A549 (cell line): ENCODE measurements at regions of chr17 and their contacts with region 1.

Region 1: DNA sequence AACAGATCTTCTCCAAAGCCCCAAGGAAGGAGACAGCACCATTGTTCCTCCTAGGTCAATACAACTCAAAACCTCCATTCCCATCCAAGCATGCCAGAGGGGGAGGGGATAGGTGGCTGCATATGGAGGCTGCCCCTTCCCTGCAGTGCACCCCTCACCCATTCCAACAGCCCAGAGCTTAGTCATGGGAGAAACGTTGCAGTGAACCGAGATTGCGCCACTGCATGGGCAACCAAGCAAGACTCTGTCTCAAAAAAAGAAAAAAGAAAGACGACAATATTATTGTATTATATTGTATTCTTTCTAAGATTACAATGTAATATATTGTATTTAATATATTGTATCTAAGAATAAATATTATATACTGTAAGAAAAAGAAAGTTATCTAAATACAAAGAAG is 36.4 kb upstream of the CD300E start:
- DNase-seq: no peak
- ATAC-seq: no peak
- H3K4me3 ChIP-seq: no peak overlapping the region
- H3K27ac ChIP-seq: no peak overlapping the region
- H3K4me1 ChIP-seq: 0 out of 3 replicates have a peak, but pooled peaks cover 3% of the 10 kb centered on the region
- CTCF ChIP-seq: no peak
- EP300 ChIP-seq: no peak
- POLR2A ChIP-seq: no peak
- RAD21 ChIP-seq: no peak

Region 2: DNA sequence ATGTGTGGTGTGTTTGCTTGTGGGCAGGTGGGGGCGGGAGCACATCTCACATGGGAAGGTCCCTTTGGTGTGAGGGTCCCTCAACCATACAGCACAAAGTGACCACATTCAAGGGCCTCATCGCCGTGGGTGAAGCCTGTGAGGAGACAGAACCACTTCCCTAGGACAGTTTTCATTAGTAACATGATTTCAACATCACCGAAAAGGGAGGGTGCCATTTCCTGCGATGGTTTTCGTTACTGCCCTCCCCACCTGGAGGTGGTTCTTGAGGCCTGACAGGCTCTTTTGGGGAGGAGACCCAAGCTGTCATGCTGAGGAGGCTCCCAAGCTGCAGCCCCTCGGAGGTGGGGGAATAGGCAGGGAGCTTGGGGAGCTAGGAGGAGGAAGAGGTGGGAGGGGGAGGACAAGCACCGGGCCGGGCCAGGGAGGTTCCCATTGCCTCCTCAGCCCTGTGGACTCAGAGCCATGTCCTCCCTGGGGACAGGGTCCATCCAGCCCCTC is 138.1 kb before region 1 on chr17:
- CTCF ChIA-PET with region 1: no interaction called
- POLR2A ChIA-PET with region 1: no interaction called
- DNase-seq: no peak
- ATAC-seq: no peak
- H3K4me3 ChIP-seq: no peak overlapping the region
- H3K27ac ChIP-seq: no peak overlapping the region
- H3K4me1 ChIP-seq: no peaks in the 10 kb centered on the region
- CTCF ChIP-seq: no peak
- EP300 ChIP-seq: no peak
- POLR2A ChIP-seq: no peak
- RAD21 ChIP-seq: no peak

Region 3: DNA sequence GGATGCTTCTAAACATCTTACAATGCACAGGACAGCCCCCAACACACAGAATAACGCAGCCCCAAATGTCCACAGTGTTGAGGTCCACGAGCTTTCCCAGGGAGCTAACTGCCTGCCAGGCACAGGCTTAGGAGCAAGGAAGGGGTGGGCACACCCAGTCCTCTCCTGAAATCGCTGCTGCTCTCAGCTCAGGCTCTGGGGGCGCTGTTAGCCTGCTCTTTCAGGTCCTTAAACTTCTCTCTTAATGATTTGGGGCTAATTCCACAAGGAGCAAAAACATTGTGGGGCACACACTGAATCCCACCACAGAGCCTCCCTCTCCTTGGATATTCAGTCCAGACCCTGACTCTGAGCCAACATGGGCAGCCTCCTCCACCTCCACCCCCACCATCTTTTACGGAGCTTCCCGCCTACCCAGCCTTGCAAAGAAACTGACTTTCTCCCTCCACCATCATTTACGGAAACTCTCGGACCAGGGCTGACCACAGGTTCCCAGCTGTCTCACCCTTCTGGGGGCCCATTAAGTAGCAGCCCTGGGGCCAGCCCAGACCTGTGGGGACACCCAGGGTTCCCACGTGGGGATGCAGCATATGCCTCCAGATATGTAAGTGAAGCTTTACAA is 93.7 kb before region 1 on chr17:
- CTCF ChIA-PET with region 1: interaction called, 16 read pairs
- POLR2A ChIA-PET with region 1: interaction called, 4 read pairs
- DNase-seq: peak; percentile 51 to 66
- ATAC-seq: peak in 1 of 2 experiments; percentile 67; a peak in 3 of 6 replicates
- H3K4me3 ChIP-seq: no peak overlapping the region
- H3K27ac ChIP-seq: peak overlapping the region in 1 of 2 experiments; percentile 41; a peak in 1 of 6 replicates
- H3K4me1 ChIP-seq: peaks cover 27% of the 10 kb centered on the region
- CTCF ChIP-seq: peak; percentile 68
- EP300 ChIP-seq: no peak
- POLR2A ChIP-seq: no peak
- RAD21 ChIP-seq: peak; percentile 64 to 75

Region 4: GRCh38 chr17:74646231-74646630 is 13.7 kb before region 1 on chr17:
- CTCF ChIA-PET with region 1: interaction called, 17 read pairs
- POLR2A ChIA-PET with region 1: no interaction called
- DNase-seq: peak; percentile 62 to 74
- ATAC-seq: peak in 1 of 2 experiments; percentile 81; a peak in 3 of 6 replicates
- H3K4me3 ChIP-seq: no peak overlapping the region
- H3K27ac ChIP-seq: no peak overlapping the region
- H3K4me1 ChIP-seq: no peaks in the 10 kb centered on the region
- CTCF ChIP-seq: peak; percentile 51
- EP300 ChIP-seq: no peak
- POLR2A ChIP-seq: no peak
- RAD21 ChIP-seq: peak; percentile 38 to 62; a peak in 4 of 5 replicates

Region 5: DNA sequence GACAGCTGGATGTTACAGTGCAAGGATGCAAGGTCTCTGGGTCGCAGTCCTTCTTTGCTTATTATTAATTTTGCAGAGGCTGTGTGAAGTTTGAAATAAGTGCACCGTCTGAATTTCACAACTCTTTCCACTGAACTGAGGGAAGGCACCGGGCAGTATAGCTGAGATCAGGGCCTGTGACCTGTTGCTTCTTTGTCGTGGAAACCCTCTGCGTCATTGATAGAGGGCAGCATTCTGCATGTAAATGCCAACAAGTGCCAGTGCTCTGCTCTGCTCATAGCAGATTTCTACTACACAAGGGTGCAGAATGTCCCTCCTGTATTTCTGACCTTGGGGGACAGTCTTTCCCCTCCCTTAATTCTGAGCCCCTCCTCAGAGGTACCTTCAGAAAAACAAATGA is 26.9 kb after region 1 on chr17:
- CTCF ChIA-PET with region 1: interaction called, 12 read pairs
- POLR2A ChIA-PET with region 1: no interaction called
- DNase-seq: peak in 1 of 2 experiments; percentile 29
- ATAC-seq: peak; percentile 65 to 75; a peak in 4 of 6 replicates
- H3K4me3 ChIP-seq: no peak overlapping the region
- H3K27ac ChIP-seq: no peak overlapping the region
- H3K4me1 ChIP-seq: no peaks in the 10 kb centered on the region
- CTCF ChIP-seq: no peak
- EP300 ChIP-seq: no peak
- POLR2A ChIP-seq: no peak
- RAD21 ChIP-seq: no peak

Region 6: GRCh38 chr17:74736513-74737298 is 76.8 kb after region 1 on chr17 and contains the start of gene RAB37:
- CTCF ChIA-PET with region 1: interaction called, 145 read pairs
- POLR2A ChIA-PET with region 1: interaction called, 8 read pairs
- DNase-seq: peak; percentile 87 to 90
- ATAC-seq: peak; percentile 70 to 76
- H3K4me3 ChIP-seq: peak within 1 kb of the TSS; percentile 40
- H3K27ac ChIP-seq: peak within 1 kb of the TSS; percentile 54 to 83
- H3K4me1 ChIP-seq: peaks cover 36% of the 10 kb centered on the region
- CTCF ChIP-seq: peak; percentile 63
- EP300 ChIP-seq: no peak
- POLR2A ChIP-seq: no peak
- RAD21 ChIP-seq: peak in 1 of 2 experiments; percentile 68; a peak in 4 of 5 replicates
- polyA plus RNA-seq, gene RAB37: 15.8 and 18.7 TPM in 2 replicates

Region 7: GRCh38 chr17:74759243-74759801 is 99.4 kb after region 1 on chr17:
- CTCF ChIA-PET with region 1: interaction called, 22 read pairs
- POLR2A ChIA-PET with region 1: no interaction called
- DNase-seq: no peak
- ATAC-seq: peak; percentile 6 to 38; a peak in 3 of 6 replicates
- H3K4me3 ChIP-seq: no peak overlapping the region
- H3K27ac ChIP-seq: peak overlapping the region; percentile 57 to 79
- H3K4me1 ChIP-seq: peaks cover 69% of the 10 kb centered on the region
- CTCF ChIP-seq: no peak
- EP300 ChIP-seq: no peak
- POLR2A ChIP-seq: no peak
- RAD21 ChIP-seq: no peak

Region 8: DNA sequence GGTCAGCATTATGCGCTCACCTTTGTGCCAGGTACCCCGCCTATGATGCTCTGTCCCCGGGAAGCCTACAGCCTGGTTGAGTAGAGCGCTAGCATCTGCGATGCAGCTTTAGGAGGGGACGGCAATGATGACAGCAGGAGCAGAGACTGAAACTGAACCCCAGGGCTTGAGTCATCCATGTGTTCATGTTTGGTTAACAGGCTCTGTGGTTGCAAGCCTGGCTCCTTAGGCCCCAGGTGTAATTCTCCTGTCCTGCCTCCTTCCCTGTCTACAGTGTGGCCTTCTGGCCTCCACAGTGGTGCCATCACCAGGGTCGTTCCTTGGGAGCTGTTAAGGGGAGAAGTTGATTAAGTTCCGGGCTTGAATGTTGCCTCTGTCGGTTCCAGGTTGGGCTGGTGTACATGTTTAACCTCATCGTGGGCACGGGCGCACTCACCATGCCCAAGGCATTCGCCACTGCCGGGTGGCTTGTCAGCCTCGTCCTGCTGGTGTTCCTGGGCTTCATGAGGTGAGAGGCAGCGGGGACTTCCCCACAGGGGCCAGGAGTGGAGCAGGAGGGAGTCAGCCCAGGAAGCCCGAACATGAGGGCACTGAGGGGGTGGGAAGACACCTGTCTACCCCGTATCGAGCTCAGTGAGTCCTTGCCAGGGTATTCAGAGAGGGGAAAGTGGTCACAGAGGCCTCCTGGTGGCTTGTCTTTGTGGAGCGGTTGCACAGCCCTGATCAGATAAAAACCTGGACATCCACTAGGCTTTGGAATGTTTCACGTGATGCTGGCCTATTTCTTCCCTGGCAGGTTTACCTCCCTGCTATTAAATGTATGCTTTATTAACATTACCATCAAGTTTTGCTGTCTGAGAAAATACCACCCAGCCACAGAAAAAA is 125.4 kb after region 1 on chr17:
- CTCF ChIA-PET with region 1: interaction called, 32 read pairs
- POLR2A ChIA-PET with region 1: no interaction called
- DNase-seq: no peak
- ATAC-seq: peak in 1 of 2 experiments; percentile 56; a peak in 3 of 6 replicates
- H3K4me3 ChIP-seq: no peak overlapping the region
- H3K27ac ChIP-seq: no peak overlapping the region
- H3K4me1 ChIP-seq: no peaks in the 10 kb centered on the region
- CTCF ChIP-seq: no peak
- EP300 ChIP-seq: no peak
- POLR2A ChIP-seq: no peak
- RAD21 ChIP-seq: no peak